ENCODE measurements at regions of chr7 and their contacts with region 1.

Region 1: GRCh38 chr7:88057655-88058054 is 123.6 kb downstream of the ADAM22 start:
- DNase-seq: no peak
- H3K4me3 ChIP-seq: no peak overlapping the region
- H3K27ac ChIP-seq: no peak overlapping the region
- H3K4me1 ChIP-seq: no peaks in the 10 kb centered on the region
- H3K27me3 ChIP-seq: no peaks in the 10 kb centered on the region
- CTCF ChIP-seq: no peak
- POLR2A ChIP-seq: no peak

Region 2: GRCh38 chr7:88073626-88074025 is 16.0 kb after region 1 on chr7:
- intact Hi-C with region 1: loop called (anchors 2 kb)
- DNase-seq: no peak
- H3K4me3 ChIP-seq: no peak overlapping the region
- H3K27ac ChIP-seq: no peak overlapping the region
- H3K4me1 ChIP-seq: no peaks in the 10 kb centered on the region
- H3K27me3 ChIP-seq: no peaks in the 10 kb centered on the region
- CTCF ChIP-seq: no peak
- POLR2A ChIP-seq: no peak

Region 3: GRCh38 chr7:88090671-88091070 is 33.0 kb after region 1 on chr7:
- intact Hi-C with region 1: no loop called
- DNase-seq: no peak
- H3K4me3 ChIP-seq: peak overlapping the region in 1 of 3 donors; percentile 44
- H3K27ac ChIP-seq: no peak overlapping the region
- H3K4me1 ChIP-seq: no peaks in the 10 kb centered on the region
- H3K27me3 ChIP-seq: no peaks in the 10 kb centered on the region
- CTCF ChIP-seq: no peak
- POLR2A ChIP-seq: no peak

Measured in breast epithelium (tissue), 4 donors.